ENCODE measurements at regions of chr15 and their contacts with region 1.

Region 1: GRCh38 chr15:88913017-88913849 is at the start of gene MFGE8:
- DNase-seq: peak; percentile 91
- total RNA-seq, gene MFGE8: 1,071 TPM

Region 2: GRCh38 chr15:88932271-88932874 is 19.1 kb after region 1 on chr15:
- intact Hi-C with region 1: loop called (anchors 2 kb)
- DNase-seq: no peak

Region 3: DNA sequence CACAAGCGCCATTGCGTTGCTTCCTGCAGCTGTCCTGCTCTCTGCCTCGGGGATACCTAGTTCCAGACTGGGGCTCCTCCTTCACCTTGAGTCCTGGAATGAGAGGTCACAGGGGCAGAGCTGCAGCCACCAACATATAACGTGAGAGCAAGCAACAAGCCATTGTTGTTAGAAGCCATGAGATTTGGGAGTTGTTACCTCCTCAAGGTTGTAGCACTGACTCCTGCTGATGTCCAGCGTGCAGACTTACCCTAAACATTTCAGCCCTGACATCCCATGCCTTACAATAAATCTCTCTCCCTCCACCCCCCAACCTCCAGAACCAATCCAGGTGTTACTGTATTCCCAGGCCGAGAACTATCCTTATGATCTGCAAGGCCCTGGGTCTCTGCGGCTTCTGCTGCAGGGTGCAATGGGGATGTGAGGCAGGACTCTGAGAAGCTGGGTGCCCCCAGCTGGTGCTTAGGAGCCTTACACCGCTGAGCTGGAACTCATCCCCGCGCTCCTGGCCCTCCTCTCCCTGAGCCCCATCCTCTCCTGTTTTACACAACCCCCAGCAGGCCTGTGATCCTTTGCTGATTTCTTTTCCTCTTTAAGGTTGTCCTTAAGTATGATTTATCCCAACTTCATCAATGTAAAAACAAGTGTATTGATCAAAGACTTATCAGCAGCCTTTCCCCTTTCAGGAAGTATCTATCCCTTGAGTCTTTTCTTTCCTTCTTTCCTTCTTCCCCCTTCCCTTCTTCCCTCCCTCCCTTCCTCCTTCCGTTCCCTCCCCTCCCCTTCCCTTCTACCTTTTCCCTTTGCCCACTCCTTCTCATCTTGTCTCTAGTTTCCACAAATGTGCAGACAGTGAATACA is 90.9 kb after region 1 on chr15:
- intact Hi-C with region 1: loop called (anchors 2 kb)
- DNase-seq: no peak